PC-3 (cell line): ENCODE measurements at regions of chr3 and their contacts with region 1.

Region 1: GRCh38 chr3:69425261-69425660 is 39.4 kb upstream of the FRMD4B start:
- DNase-seq: peak; percentile 51
- ATAC-seq: peak; percentile 54
- H3K4me3 ChIP-seq: no peak overlapping the region
- H3K27ac ChIP-seq: no peak overlapping the region
- H3K4me1 ChIP-seq: no peaks in the 10 kb centered on the region
- H3K27me3 ChIP-seq: no peaks in the 10 kb centered on the region
- CTCF ChIP-seq: peak; percentile 63

Region 2: DNA sequence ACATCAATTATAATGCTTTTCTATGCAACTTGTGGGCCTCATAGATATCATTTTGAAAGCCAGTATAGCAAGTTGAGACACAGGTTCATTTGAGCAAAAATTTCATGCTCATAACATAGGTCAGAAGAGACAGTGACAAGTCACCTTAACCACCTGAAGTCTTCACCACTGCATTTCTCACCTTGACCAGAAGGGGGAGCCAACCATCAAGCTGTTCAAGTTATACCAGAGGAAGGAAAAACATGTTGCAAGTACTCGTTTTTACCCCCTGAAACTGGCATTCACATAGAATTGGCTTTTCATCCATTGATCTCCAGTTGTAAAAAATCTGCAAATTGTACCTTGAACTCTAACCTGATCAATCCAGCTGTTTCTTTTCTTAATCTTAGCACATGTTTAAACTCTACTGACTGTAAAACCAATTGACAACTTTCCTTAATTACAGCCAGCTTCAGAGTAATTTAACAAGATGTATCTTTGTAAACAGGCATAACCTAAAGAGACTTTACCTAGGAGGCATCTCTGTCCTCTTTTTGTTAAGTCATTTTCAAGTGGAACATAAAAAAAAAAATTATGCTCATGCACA is 304.3 kb before region 1 on chr3:
- CTCF ChIA-PET with region 1: no interaction called
- POLR2A ChIA-PET with region 1: no interaction called
- intact Hi-C with region 1: loop called (anchors 5 kb)
- DNase-seq: peak; percentile 77
- ATAC-seq: peak; percentile 79
- H3K4me3 ChIP-seq: no peak overlapping the region
- H3K27ac ChIP-seq: no peak overlapping the region
- H3K4me1 ChIP-seq: peaks cover 11% of the 10 kb centered on the region
- H3K27me3 ChIP-seq: no peaks in the 10 kb centered on the region
- CTCF ChIP-seq: peak; percentile 73

Region 3: DNA sequence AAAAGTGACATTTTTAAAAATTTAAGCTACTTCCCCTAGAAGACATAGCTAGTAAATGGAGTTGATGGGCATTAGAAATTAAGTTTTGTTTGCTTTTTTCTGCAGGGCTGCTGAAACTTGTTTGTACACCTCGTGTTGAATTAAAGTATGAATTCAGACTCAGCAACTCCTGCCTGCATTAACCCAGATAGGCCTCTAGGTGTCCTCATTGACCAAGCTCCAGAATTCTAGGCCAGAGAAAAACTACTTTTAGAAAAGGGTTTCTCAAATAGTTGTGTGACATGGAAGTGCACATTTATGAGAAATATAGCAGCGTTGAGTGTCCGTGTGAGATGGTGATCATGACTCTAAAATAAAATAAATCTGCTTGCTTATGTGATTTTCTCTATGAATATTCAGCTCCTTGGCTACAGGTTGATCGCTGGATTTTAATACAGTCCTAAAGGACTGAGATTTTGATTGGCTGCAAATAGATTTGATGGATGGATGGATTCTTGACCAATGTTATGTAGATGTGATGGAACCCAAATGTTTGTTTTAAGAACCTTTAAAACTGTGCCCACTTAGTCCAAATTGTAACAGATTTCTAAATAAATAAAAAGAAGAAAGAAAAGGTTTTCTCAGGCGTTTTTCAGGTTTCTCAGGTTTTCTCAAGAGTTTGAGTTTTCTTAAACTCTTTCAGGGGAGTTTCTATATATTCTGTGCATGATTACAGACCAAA is 263.5 kb before region 1 on chr3:
- CTCF ChIA-PET with region 1: no interaction called
- POLR2A ChIA-PET with region 1: no interaction called
- intact Hi-C with region 1: loop called (anchors 2 kb)
- DNase-seq: peak; percentile 52
- ATAC-seq: peak; percentile 20; the same call in 1 of the 2 replicates
- H3K4me3 ChIP-seq: no peak overlapping the region
- H3K27ac ChIP-seq: no peak overlapping the region
- H3K4me1 ChIP-seq: no peaks in the 10 kb centered on the region
- H3K27me3 ChIP-seq: no peaks in the 10 kb centered on the region
- CTCF ChIP-seq: peak; percentile 80

Region 4: DNA sequence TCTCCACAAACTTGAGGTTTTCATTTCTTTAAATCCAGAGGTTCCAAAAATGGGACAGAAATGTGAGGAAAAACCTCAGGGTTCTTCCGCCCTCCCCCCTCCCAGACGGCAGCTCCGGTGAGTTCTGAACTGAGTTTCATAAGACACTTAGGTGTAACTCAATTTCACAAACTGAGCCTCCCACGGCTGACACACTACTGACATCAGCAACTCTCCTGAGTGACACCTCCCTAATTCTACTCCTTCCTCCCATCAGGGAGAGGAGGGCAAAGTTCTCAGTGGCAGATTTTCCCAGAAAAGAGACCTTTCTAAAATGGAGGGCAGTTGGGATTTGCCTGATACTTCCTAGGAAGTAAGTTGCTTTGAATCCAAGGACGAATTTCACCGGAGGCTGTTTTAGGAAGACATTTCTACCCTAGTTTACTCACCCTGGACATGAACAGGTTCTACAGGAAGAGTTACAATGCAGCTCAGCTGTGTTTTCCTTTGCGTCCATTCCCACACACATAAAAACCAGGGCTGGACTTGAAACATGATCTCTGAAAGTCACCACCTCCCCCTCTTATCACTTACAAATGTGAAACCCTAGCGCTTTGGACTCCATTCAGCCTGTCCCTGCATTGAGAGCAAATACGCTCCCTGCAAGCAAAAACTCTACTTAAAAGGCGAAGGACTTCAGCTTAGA is 224.7 kb before region 1 on chr3:
- CTCF ChIA-PET with region 1: no interaction called
- POLR2A ChIA-PET with region 1: no interaction called
- intact Hi-C with region 1: no loop called
- DNase-seq: peak; percentile 83
- ATAC-seq: peak; percentile 68
- H3K4me3 ChIP-seq: peak overlapping the region; percentile 89
- H3K27ac ChIP-seq: peak overlapping the region; percentile 97
- H3K4me1 ChIP-seq: peaks cover 27% of the 10 kb centered on the region
- H3K27me3 ChIP-seq: no peaks in the 10 kb centered on the region
- CTCF ChIP-seq: no peak

Region 5: DNA sequence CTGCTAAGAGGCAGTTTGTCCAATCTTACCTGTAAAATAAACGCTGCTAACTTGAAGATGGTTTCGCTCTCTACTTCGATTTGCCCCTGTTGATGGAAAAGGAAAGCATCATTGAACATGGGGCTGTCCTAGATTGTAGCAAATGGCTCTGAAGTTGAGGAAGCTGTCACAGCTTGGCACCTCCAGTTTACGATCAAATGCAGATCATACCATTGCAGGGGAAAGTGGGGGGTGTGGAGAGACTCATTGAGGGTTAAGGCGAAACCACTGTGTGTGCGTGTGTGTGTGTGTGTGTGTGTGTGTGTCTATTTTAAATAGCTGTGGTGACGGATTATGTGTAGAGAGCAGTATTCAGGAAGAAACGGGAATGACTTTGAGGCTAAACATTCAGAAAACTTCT is 175.2 kb before region 1 on chr3:
- CTCF ChIA-PET with region 1: no interaction called
- POLR2A ChIA-PET with region 1: no interaction called
- intact Hi-C with region 1: no loop called
- DNase-seq: no peak
- ATAC-seq: no peak
- H3K4me3 ChIP-seq: no peak overlapping the region
- H3K27ac ChIP-seq: no peak overlapping the region
- H3K4me1 ChIP-seq: no peaks in the 10 kb centered on the region
- H3K27me3 ChIP-seq: no peaks in the 10 kb centered on the region
- CTCF ChIP-seq: no peak